Gastrocnemius medialis (tissue), 4 donors: ENCODE measurements at regions of chr10 and their contacts with region 1.

Region 1: DNA sequence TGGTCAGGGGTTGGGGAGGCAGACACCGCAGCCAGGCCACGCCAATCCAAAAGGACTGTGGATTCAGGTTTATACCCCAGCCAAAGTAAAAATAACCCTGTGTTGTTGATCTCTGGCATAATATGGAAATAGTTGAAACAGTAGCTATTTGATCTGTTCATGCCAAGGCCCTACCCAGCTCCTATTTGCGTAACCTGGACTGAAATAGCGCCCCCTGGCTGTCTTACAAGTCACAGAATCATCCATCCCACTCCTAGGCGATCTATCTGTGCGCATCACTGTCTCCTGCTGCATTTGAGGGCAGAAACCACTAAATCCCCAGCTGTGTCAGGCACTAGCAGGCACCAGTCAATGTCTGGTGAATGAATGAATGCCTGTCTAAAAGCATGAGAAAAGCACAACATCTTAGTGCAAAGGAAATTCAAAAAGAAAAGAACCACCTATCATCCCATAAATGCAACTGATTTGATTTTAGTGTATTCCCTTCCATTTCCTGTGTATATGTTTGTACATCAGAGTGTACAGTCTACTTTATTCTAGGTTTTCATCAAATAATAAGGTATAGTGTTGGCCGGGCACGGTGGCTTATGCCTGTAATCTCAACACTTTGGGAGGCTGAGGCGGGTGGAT is 160.0 kb downstream of the SLIT1 start:
- DNase-seq: peak; percentile 69 to 82
- ATAC-seq: peak; percentile 68 to 70
- H3K4me3 ChIP-seq: peak overlapping the region in 1 of 4 donors; percentile 17
- H3K27ac ChIP-seq: peak overlapping the region; percentile 79 to 96 (median 88)
- H3K4me1 ChIP-seq: peaks cover 31 to 32% of the 10 kb centered on the region in 2 donors
- H3K27me3 ChIP-seq: no peaks in the 10 kb centered on the region
- CTCF ChIP-seq: peak; percentile 76 to 89 (median 86)
- POLR2A ChIP-seq: no peak

Region 2: GRCh38 chr10:96390460-96390864 is 635.3 kb before region 1 on chr10:
- in situ Hi-C with region 1: loop called in 2 of 4 experiments (anchors 25 kb)
- intact Hi-C with region 1: loop called (anchors 5 kb)
- DNase-seq: peak; percentile 77 to 92
- ATAC-seq: peak; percentile 98 to 100
- H3K4me3 ChIP-seq: no peak overlapping the region
- H3K27ac ChIP-seq: peak overlapping the region in 3 of 4 donors; percentile 42 to 64 (median 53)
- H3K4me1 ChIP-seq: peaks cover 8 to 16% of the 10 kb centered on the region in 2 donors
- H3K27me3 ChIP-seq: no peaks in the 10 kb centered on the region
- CTCF ChIP-seq: no peak
- POLR2A ChIP-seq: no peak

Region 3: DNA sequence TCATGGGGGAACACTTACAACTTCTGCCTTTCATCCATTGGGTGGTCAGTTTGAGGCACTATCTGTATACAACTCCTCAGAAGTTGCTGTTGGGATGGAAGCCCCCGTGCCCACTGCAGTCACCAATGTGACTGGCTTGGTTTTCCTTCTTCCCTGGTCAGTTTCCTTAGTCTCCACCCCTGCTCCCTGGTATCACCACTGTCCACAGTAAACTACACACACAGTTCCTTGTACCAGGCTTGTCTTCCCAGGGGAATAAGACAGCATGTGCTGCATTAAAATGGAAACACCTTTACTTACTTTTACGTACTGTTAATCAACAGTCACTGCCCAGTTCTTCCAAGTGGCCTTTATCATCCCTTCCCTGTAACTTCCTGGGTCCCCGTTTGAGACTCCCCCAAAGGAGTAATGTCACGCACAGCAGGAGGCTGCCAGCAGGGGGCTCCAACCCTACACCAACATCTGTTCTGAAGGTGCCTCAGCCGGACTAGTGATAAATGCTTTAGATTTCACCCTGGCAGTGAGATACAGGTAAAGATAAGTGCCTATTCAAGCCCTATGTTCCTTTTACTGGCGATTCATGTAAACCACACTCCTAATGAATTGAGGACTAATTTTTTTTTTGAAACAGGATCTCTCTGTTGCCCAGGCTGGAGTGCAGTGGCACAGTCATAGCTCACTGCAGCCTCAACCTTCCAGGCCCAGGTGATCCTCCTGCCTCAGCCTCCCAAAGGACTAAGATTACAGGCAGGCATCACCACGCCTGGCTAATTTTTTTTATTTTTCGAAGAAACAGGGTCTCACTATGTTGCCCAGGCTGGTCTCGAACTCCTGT is 260.1 kb before region 1 on chr10:
- in situ Hi-C with region 1: loop called in 1 of 4 experiments (anchors 10 kb)
- intact Hi-C with region 1: loop called (anchors 5 kb)
- DNase-seq: peak; percentile 12 to 41
- ATAC-seq: peak in 1 of 2 donors; percentile 70
- H3K4me3 ChIP-seq: no peak overlapping the region
- H3K27ac ChIP-seq: no peak overlapping the region
- H3K4me1 ChIP-seq: no peaks in the 10 kb centered on the region
- H3K27me3 ChIP-seq: no peaks in the 10 kb centered on the region
- CTCF ChIP-seq: peak; percentile 39 to 72 (median 65)
- POLR2A ChIP-seq: no peak

Region 4: GRCh38 chr10:96910488-96911395 is 115.0 kb before region 1 on chr10:
- in situ Hi-C with region 1: loop called (anchors 5 to 10 kb)
- intact Hi-C with region 1: loop called (anchors 1 kb)
- DNase-seq: no peak
- ATAC-seq: peak; percentile 74 to 89
- H3K4me3 ChIP-seq: no peak overlapping the region
- H3K27ac ChIP-seq: peak overlapping the region in 3 of 4 donors; percentile 9 to 61 (median 58)
- H3K4me1 ChIP-seq: peaks cover 41 to 64% of the 10 kb centered on the region in 2 donors
- H3K27me3 ChIP-seq: no peaks in the 10 kb centered on the region
- CTCF ChIP-seq: peak; percentile 52 to 79 (median 67)
- POLR2A ChIP-seq: no peak

Region 5: GRCh38 chr10:96949039-96949683 is 76.6 kb before region 1 on chr10:
- in situ Hi-C with region 1: no loop called
- intact Hi-C with region 1: loop called (anchors 2 kb)
- DNase-seq: no peak
- ATAC-seq: peak; percentile 41 to 60
- H3K4me3 ChIP-seq: no peak overlapping the region
- H3K27ac ChIP-seq: peak overlapping the region; percentile 2 to 74 (median 27)
- H3K4me1 ChIP-seq: peaks cover 37 to 46% of the 10 kb centered on the region in 2 donors
- H3K27me3 ChIP-seq: no peaks in the 10 kb centered on the region
- CTCF ChIP-seq: no peak
- POLR2A ChIP-seq: no peak

Region 6: GRCh38 chr10:97179731-97180362 is 154.1 kb after region 1 on chr10:
- in situ Hi-C with region 1: no loop called
- intact Hi-C with region 1: no loop called
- DNase-seq: no peak
- ATAC-seq: no peak
- H3K4me3 ChIP-seq: no peak overlapping the region
- H3K27ac ChIP-seq: no peak overlapping the region
- H3K4me1 ChIP-seq: no peaks in the 10 kb centered on the region
- H3K27me3 ChIP-seq: peaks cover 19 to 32% (median 23%) of the 10 kb centered on the region in 3 donors
- CTCF ChIP-seq: no peak
- POLR2A ChIP-seq: no peak